ENCODE measurements at regions of chr2 and their contacts with region 1.

Region 1: DNA sequence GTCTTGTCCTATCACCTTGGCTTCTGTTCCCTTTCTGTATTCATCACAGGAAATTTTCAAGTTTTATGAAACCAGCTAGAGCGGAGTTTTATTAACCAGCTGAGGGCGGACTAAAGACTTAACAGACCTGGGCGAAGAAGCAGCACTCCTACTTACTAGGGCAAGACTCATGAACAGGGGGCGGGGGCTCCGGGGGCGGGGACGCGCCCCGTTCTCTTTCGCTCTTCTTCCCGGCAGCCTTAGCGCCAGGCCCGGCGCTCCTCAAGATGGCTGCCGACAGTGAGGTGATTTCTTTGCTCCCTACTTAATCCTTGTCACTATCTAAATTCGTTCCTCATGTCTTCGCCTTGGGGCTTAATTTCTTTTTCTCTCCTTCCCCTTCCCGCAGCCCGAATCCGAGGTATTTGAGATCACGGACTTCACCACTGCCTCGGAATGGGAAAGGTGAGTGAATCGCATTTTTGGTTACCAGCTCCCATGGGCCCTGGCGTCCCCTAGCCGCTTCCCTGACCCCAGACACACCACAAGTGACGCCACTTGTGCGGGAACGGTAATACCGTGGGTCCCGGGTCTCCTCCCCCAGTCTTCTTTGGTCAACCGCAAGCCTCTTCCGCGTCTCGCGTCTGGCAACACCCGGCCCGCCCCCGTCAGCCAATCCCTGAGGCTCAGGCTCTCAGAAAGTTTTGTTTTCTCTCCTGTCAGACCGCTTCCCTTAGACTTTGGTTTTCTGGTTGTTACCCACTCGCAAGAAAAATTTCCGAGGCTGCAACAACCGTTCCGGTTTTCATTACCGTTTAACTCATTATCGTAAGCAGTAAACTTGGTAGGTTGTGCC is at the start of gene RAB3GAP1:
- DNase-seq: peak; percentile 97
- H3K4me3 Mint-ChIP-seq: peak within 1 kb of the TSS; percentile 99
- H3K27ac Mint-ChIP-seq: peak within 1 kb of the TSS; percentile 100
- H3K4me1 Mint-ChIP-seq: peaks cover 40% of the 10 kb centered on the region
- H3K27me3 Mint-ChIP-seq: no peaks in the 10 kb centered on the region
- total RNA-seq, gene RAB3GAP1: 55.5 to 59.7 TPM

Region 2: GRCh38 chr2:134178241-134178877 is 873.9 kb before region 1 on chr2:
- CTCF ChIA-PET with region 1: no interaction called
- intact Hi-C with region 1: loop called (anchors 5 kb)
- DNase-seq: no peak
- H3K4me3 Mint-ChIP-seq: no peak overlapping the region
- H3K27ac Mint-ChIP-seq: no peak overlapping the region
- H3K4me1 Mint-ChIP-seq: peaks cover 65% of the 10 kb centered on the region
- H3K27me3 Mint-ChIP-seq: no peaks in the 10 kb centered on the region

Region 3: GRCh38 chr2:134823419-134823818 is 228.8 kb before region 1 on chr2:
- CTCF ChIA-PET with region 1: no interaction called
- intact Hi-C with region 1: no loop called
- DNase-seq: no peak
- H3K4me3 Mint-ChIP-seq: no peak overlapping the region
- H3K27ac Mint-ChIP-seq: no peak overlapping the region
- H3K4me1 Mint-ChIP-seq: no peaks in the 10 kb centered on the region
- H3K27me3 Mint-ChIP-seq: peaks cover 9% of the 10 kb centered on the region

Region 4: GRCh38 chr2:134973241-134974138 is 78.8 kb before region 1 on chr2:
- CTCF ChIA-PET with region 1: no interaction called
- intact Hi-C with region 1: loop called (anchors 1 kb)
- DNase-seq: no peak
- H3K4me3 Mint-ChIP-seq: no peak overlapping the region
- H3K27ac Mint-ChIP-seq: peak overlapping the region; percentile 6
- H3K4me1 Mint-ChIP-seq: peaks cover 15% of the 10 kb centered on the region
- H3K27me3 Mint-ChIP-seq: peaks cover 3% of the 10 kb centered on the region

Region 5: GRCh38 chr2:135245055-135245454 is 192.8 kb after region 1 on chr2:
- CTCF ChIA-PET with region 1: no interaction called
- intact Hi-C with region 1: loop called (anchors 1 kb)
- DNase-seq: peak; percentile 45
- H3K4me3 Mint-ChIP-seq: no peak overlapping the region
- H3K27ac Mint-ChIP-seq: peak overlapping the region; percentile 84
- H3K4me1 Mint-ChIP-seq: peaks cover 12% of the 10 kb centered on the region
- H3K27me3 Mint-ChIP-seq: no peaks in the 10 kb centered on the region

Region 6: GRCh38 chr2:135741395-135742324 is 689.4 kb after region 1 on chr2 and contains the start of gene UBXN4:
- CTCF ChIA-PET with region 1: no interaction called
- intact Hi-C with region 1: loop called (anchors 1 kb)
- DNase-seq: peak; percentile 98
- H3K4me3 Mint-ChIP-seq: peak within 1 kb of the TSS; percentile 98
- H3K27ac Mint-ChIP-seq: peak within 1 kb of the TSS; percentile 99
- H3K4me1 Mint-ChIP-seq: peaks cover 30% of the 10 kb centered on the region
- H3K27me3 Mint-ChIP-seq: no peaks in the 10 kb centered on the region
- total RNA-seq, gene UBXN4: 100 to 105 TPM

Region 7: DNA sequence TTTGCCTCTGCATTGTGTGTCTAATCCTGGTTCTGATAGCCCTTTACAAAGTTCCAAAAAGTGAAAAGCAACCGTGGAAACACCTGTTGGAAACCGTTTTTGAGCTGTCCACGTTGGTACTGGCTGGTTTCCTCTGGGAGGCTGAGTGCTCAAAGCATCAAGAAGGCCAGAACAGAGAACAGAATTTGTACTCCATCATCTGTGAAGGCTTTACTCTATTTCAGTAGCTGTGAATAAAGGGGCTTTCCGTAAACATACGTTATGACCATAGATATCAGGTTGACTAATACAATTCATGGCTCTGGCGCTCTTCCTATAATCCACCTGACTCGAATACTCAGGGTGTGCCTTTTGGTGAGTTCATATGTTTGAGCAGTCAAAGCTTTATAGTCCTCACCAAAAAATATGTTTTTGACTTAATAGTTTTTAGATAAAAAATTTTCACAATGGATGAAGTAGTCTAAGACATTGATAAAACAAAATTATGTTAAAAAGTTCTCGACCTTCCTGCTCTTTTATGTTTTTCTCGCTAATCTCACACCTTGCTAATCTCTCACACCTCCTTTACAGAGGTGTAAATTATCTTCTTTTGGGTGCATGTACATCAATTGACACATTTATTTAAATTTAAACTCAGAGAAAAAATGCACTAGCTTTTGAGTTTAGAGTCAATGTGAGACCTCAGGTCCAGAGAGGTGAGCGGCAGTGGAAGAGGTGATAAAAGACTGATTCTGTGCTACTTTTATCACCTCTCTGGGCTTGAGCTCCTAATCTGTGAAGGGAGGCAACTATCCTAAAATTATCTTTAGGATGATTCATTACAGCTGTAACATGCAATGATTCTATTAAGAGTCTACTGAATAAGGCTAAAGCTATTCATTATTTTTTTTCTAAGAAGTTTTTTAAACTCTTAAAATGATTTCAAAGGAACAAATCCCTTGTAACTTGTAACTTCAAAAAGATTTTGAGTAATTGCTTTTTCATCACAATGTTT is 1000.4 kb after region 1 on chr2:
- CTCF ChIA-PET with region 1: no interaction called
- intact Hi-C with region 1: loop called (anchors 2 kb)
- DNase-seq: peak; percentile 53
- H3K4me3 Mint-ChIP-seq: peak overlapping the region; percentile 53
- H3K27ac Mint-ChIP-seq: peak overlapping the region; percentile 96
- H3K4me1 Mint-ChIP-seq: peaks cover 88% of the 10 kb centered on the region
- H3K27me3 Mint-ChIP-seq: no peaks in the 10 kb centered on the region

Measured in activated naive CD4-positive, alpha-beta T cell treated with anti-CD3 and anti-CD28 coated beads for 36 hours (primary cell).